ENCODE measurements at regions of chr5 and their contacts with region 1.

Region 1: GRCh38 chr5:39570403-39571027 is 145.7 kb upstream of the DAB2 start:
- DNase-seq: no peak
- H3K4me3 ChIP-seq: no peak overlapping the region
- H3K27ac ChIP-seq: no peak overlapping the region
- H3K4me1 ChIP-seq: no peaks in the 10 kb centered on the region
- H3K27me3 ChIP-seq: peaks cover 0 to 2% of the 10 kb centered on the region in 2 donors
- CTCF ChIP-seq: peak; percentile 71 to 74

Region 2: DNA sequence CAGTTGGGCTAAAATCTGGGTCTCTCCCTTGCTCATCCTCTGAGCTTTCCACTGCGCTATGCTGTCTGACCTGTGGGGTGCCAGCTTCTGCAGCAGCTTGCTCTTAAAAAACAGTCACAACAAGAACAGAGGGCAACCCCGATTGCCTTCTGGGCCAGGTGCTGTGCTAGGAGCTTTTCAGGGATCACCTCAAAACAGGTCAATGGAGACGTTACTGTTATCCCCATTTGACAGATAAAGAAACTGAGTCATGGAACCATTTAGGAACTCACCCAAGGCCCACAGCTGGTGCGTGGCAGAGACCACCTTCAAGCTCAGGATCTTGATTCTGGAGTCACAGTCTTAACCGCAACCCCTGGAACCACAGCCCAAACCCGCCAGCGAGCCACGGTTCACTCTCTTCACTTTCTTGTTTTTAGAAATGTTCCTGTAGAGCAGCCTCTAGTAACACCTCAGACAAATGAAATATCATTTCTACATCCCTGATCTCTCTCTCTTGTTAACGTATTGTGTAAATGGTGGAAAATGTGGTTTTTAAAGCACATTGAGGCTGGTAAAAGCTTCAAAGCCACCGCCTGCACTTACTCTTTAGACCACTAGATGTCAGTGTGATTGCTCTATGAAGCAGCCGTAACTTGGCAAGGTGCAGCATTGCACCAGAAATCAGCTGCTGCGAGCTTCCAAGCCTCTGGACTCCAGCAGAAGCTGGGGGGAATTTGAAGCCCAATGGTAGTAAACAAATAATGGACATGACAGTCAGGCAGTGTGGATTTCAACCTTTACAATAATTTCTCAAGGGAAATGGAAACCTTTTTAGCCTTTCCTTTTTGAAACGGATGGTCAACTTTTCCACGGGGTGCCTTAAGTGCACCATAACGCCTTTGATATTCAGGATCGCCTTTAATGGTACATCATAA is 352.9 kb before region 1 on chr5:
- intact Hi-C with region 1: loop called (anchors 5 kb)
- DNase-seq: peak; percentile 80 to 87
- H3K4me3 ChIP-seq: no peak overlapping the region
- H3K27ac ChIP-seq: no peak overlapping the region
- H3K4me1 ChIP-seq: no peaks in the 10 kb centered on the region
- H3K27me3 ChIP-seq: no peaks in the 10 kb centered on the region
- CTCF ChIP-seq: peak; percentile 92 to 94

Measured in tibial artery (tissue), 4 donors.